ENCODE measurements at regions of chr22 and their contacts with region 1.

Region 1: GRCh38 chr22:38927033-38927781 is 30.2 kb upstream of the APOBEC3A start:
- DNase-seq: peak; percentile 50 to 65
- H3K4me3 ChIP-seq: peak overlapping the region; percentile 14 to 57 (median 42)
- H3K27ac ChIP-seq: peak overlapping the region in 1 of 2 donors; percentile 13
- H3K4me1 ChIP-seq: peaks cover 0 to 13% of the 10 kb centered on the region in 2 donors
- H3K27me3 ChIP-seq: no peaks in the 10 kb centered on the region
- CTCF ChIP-seq: peak in 2 of 3 donors; percentile 40 to 41
- POLR2A ChIP-seq: no peak

Region 2: GRCh38 chr22:38872172-38872830 is 54.9 kb before region 1 on chr22 and contains the start of gene CBX6:
- intact Hi-C with region 1: loop called (anchors 10 kb)
- DNase-seq: peak; percentile 90 to 95
- H3K4me3 ChIP-seq: peak within 1 kb of the TSS; percentile 75 to 99 (median 76)
- H3K27ac ChIP-seq: peak within 1 kb of the TSS; percentile 96 to 97
- H3K4me1 ChIP-seq: peaks cover 0 to 10% of the 10 kb centered on the region in 2 donors
- H3K27me3 ChIP-seq: no peaks in the 10 kb centered on the region
- CTCF ChIP-seq: no peak
- POLR2A ChIP-seq: peak; percentile 26
- total RNA-seq, gene CBX6: 20.2 to 34.7 (median 25.9) TPM

Region 3: GRCh38 chr22:38963872-38964271 is 36.7 kb after region 1 on chr22:
- intact Hi-C with region 1: loop called (anchors 1 kb)
- DNase-seq: no peak
- H3K4me3 ChIP-seq: no peak overlapping the region
- H3K27ac ChIP-seq: no peak overlapping the region
- H3K4me1 ChIP-seq: no peaks in the 10 kb centered on the region
- H3K27me3 ChIP-seq: no peaks in the 10 kb centered on the region
- CTCF ChIP-seq: no peak
- POLR2A ChIP-seq: no peak

Region 4: DNA sequence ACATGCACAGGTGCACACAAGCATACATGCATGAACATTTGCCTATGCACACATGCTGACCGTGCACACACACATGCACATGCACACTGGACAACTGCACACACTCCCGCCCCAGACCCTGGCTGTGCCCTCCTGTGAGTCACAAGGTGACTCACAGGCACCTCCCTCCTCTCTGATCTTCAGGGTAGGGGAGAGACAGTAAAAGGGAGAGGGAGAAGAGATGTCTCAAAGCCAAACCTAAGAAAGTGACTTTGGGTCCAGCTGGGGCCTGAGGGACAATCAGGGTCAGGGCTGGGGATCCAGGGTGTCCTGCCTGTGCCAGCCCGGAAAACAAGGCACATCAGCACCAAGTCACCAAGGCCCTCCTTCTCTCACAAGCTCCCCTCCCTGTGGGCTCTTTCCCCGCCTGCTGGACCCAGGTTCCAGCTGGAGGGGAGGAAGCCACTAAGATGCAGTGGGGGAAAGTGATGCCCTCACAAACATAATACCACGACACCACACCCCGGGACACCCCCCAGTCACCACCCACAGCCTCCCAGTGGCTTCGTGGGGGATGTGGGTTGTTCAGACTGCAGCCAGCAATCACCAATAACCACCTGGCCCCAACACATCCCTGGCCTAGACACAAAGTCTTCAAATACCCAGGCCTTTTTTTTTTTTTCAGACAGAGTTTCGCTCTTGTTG is 278.3 kb after region 1 on chr22:
- intact Hi-C with region 1: no loop called
- DNase-seq: no peak
- H3K4me3 ChIP-seq: no peak overlapping the region
- H3K27ac ChIP-seq: no peak overlapping the region
- H3K4me1 ChIP-seq: no peaks in the 10 kb centered on the region
- H3K27me3 ChIP-seq: no peaks in the 10 kb centered on the region
- CTCF ChIP-seq: no peak
- POLR2A ChIP-seq: no peak

Measured in breast epithelium (tissue), 4 donors.